ENCODE measurements at regions of chr3 and their contacts with region 1.

Region 1: GRCh38 chr3:184335661-184336546 is 1.5 kb upstream of the FAM131A start:
- DNase-seq: peak; percentile 94
- H3K4me3 ChIP-seq: peak overlapping the region; percentile 73 to 97 (median 86)
- H3K27ac ChIP-seq: peak overlapping the region; percentile 95 to 100 (median 99)
- H3K4me1 ChIP-seq: peaks cover 3 to 48% (median 45%) of the 10 kb centered on the region in 4 donors
- H3K27me3 ChIP-seq: no peaks in the 10 kb centered on the region
- CTCF ChIP-seq: no peak
- EP300 ChIP-seq: peak in 2 of 4 donors; percentile 20 to 63
- POLR2A ChIP-seq: peak; percentile 78 to 90

Region 2: DNA sequence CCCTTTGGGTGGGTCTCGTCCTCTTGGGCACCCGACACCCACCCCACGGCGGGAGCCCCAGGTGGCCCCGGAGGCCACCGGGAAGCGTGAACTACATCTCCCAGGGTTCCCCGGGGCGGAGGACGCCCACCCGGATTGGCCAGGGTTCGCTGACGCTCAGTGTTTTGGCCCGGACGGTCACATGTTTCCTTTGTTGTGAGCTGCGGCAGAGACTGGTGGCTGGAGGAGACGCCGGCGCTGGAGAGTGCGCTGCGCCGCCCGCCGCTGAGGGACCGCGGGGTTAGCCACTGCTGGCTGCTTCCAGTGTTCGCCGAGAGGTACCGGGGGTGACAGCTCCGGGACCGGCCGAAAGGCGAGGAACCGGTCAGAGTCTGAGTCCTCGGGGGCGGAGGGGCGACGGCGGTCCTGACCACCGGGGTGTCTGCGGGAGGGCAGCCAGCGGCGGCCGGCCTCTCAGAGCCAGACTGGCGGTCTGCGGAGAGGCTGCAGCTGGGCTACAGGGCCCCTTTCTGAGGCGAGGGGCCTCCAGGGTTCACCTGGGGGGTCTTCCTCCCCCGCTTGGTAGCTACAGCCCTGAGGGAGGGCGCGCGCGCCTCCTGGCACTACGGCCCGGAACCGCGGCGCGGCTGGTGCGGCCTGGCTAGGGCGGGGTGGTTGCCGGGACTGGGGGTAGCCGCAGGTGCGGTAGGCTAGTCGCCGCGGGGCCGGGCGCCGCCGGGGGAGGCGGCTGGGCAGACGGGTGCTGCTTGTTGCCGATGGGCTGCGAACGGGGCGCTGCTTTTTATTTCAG is 700.3 kb before region 1 on chr3 and contains the start of gene KLHL24:
- intact Hi-C with region 1: loop called (anchors 10 kb)
- DNase-seq: peak; percentile 96
- H3K4me3 ChIP-seq: peak within 1 kb of the TSS; percentile 84 to 95 (median 92)
- H3K27ac ChIP-seq: peak within 1 kb of the TSS; percentile 95 to 98 (median 96)
- H3K4me1 ChIP-seq: peaks cover 0 to 37% (median 30%) of the 10 kb centered on the region in 4 donors
- H3K27me3 ChIP-seq: no peaks in the 10 kb centered on the region
- CTCF ChIP-seq: no peak
- EP300 ChIP-seq: no peak
- POLR2A ChIP-seq: peak; percentile 98 to 99
- total RNA-seq, gene KLHL24: 144 to 201 (median 171) TPM

Region 3: GRCh38 chr3:184314363-184314699 is 21.6 kb before region 1 on chr3 and contains the start of gene EIF4G1:
- intact Hi-C with region 1: loop called (anchors 1 kb)
- DNase-seq: peak; percentile 98
- H3K4me3 ChIP-seq: peak within 1 kb of the TSS; percentile 68 to 93 (median 88)
- H3K27ac ChIP-seq: peak within 1 kb of the TSS; percentile 98 to 99 (median 98)
- H3K4me1 ChIP-seq: peaks cover 0 to 45% (median 39%) of the 10 kb centered on the region in 4 donors
- H3K27me3 ChIP-seq: no peaks in the 10 kb centered on the region
- CTCF ChIP-seq: no peak
- EP300 ChIP-seq: peak in 1 of 4 donors; percentile 30
- POLR2A ChIP-seq: peak in 1 of 2 donors; percentile 27
- total RNA-seq, gene EIF4G1: 115 to 241 (median 182) TPM

Region 4: GRCh38 chr3:184320099-184320445 is 15.8 kb before region 1 on chr3:
- intact Hi-C with region 1: loop called (anchors 1 kb)
- DNase-seq: peak; percentile 99
- H3K4me3 ChIP-seq: peak overlapping the region in 3 of 4 donors; percentile 31 to 47 (median 41)
- H3K27ac ChIP-seq: peak overlapping the region; percentile 91 to 99 (median 98)
- H3K4me1 ChIP-seq: peaks cover 0 to 72% (median 68%) of the 10 kb centered on the region in 4 donors
- H3K27me3 ChIP-seq: no peaks in the 10 kb centered on the region
- CTCF ChIP-seq: no peak
- EP300 ChIP-seq: no peak
- POLR2A ChIP-seq: no peak

Region 5: GRCh38 chr3:184362668-184363540 is 27.0 kb after region 1 on chr3:
- intact Hi-C with region 1: loop called (anchors 2 kb)
- DNase-seq: peak; percentile 98
- H3K4me3 ChIP-seq: peak overlapping the region; percentile 63 to 94 (median 86)
- H3K27ac ChIP-seq: peak overlapping the region; percentile 93 to 99 (median 98)
- H3K4me1 ChIP-seq: peaks cover 0 to 37% (median 34%) of the 10 kb centered on the region in 4 donors
- H3K27me3 ChIP-seq: no peaks in the 10 kb centered on the region
- CTCF ChIP-seq: peak; percentile 33 to 50 (median 44)
- EP300 ChIP-seq: no peak
- POLR2A ChIP-seq: peak; percentile 46 to 69

Measured in sigmoid colon (tissue), 7 donors.